Dorsolateral prefrontal cortex (tissue), 120 donors: ENCODE measurements at regions of chr1 and their contacts with region 1.

Region 1: DNA sequence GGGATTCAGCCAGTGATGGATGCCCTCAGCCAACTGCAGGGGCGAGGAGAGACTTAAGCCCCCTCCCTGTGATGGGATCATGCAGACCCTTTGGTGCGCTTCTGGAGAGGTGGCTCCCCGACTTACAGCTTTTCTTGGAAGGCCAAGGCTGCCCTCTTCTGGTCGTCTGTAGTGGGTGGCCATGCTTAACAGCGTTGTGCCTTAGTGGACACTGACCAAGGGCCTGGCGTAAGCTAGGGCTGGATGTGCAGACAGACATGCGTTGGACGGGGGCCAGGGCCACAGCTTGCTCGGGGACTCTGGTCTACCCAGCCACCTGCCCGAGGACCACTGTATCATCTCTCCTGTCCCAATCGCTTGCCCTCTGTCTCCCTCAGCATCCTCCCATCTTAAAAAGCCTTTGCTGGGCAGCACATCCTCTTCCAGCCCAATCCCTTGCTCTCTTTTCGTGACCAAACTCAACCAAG is 5.5 kb downstream of the AZIN2 start:
- DNase-seq: peak; percentile 82 to 92 (median 86)
- H3K4me3 ChIP-seq: peak overlapping the region in 13 of 59 donors; percentile 3 to 33 (median 18)
- H3K27ac ChIP-seq: peak overlapping the region in 49 of 59 donors; percentile 7 to 92 (median 52)
- H3K27me3 ChIP-seq: no peaks in the 10 kb centered on the region
- CTCF ChIP-seq: peak; percentile 39 to 95 (median 86)

Region 2: GRCh38 chr1:32876341-32877210 is 209.8 kb before region 1 on chr1:
- intact Hi-C with region 1: loop called in 1 of 2 experiments (anchors 5 kb)
- DNase-seq: peak in 6 of 10 donors; percentile 52 to 68 (median 62)
- H3K4me3 ChIP-seq: no peak overlapping the region
- H3K27ac ChIP-seq: peak overlapping the region in 1 of 59 donors; percentile 84
- H3K27me3 ChIP-seq: no peaks in the 10 kb centered on the region
- CTCF ChIP-seq: peak; percentile 41 to 92 (median 84)

Region 3: DNA sequence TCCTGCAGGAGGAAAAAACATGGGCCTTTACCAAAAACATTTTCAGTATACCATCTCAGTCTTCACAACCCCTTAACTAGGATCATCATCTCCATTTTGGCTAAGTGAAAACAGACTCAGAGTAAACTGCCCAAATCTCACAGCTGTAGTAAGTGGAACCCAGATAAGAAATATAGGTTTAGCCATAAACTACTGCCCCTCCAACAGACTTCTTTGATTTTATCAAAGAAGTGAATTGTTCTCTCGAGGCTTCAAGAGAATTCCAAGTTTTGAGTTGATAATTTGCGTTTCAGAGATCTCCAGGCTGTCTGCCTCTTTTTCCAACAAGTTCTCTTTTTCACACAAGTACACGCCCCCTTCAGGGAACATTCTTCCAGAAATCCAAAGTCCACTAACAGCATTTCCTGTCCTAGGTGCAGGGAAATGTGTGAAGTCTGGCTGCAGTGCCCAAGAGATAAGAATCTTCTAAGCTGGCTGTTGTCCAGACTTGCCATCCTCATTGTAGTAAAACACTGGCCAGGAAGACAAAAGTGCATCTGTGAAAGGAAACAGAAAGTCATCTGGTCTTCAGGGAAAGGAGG is 152.6 kb before region 1 on chr1:
- intact Hi-C with region 1: loop called (anchors 1 to 2 kb)
- DNase-seq: no peak
- H3K4me3 ChIP-seq: no peak overlapping the region
- H3K27ac ChIP-seq: peak overlapping the region in 43 of 59 donors; percentile 4 to 76 (median 44)
- H3K27me3 ChIP-seq: no peaks in the 10 kb centered on the region
- CTCF ChIP-seq: peak in 19 of 56 donors; percentile 3 to 57 (median 19)